ENCODE measurements at regions of chr12 and their contacts with region 1.

Region 1: GRCh38 chr12:109573029-109573913 is at the starts of genes MMAB and MVK:
- DNase-seq: peak; percentile 99 to 100 (median 100)
- ATAC-seq: peak; percentile 99
- H3K4me3 ChIP-seq: peak within 1 kb of the TSS; percentile 28 to 46
- H3K27ac ChIP-seq: peak within 1 kb of the TSS; percentile 79 to 92 (median 91)
- H3K4me1 ChIP-seq: peaks cover 31% of the 10 kb centered on the region
- H3K27me3 ChIP-seq: no peaks in the 10 kb centered on the region
- CTCF ChIP-seq: peak in 3 of 7 experiments; percentile 13 to 22 (median 16)
- POLR2A ChIP-seq: peak; percentile 12 to 88 (median 85)
- total RNA-seq, gene MMAB: 12.5 to 29.7 TPM
- total RNA-seq, gene MVK: 8.6 to 12.2 TPM

Region 2: DNA sequence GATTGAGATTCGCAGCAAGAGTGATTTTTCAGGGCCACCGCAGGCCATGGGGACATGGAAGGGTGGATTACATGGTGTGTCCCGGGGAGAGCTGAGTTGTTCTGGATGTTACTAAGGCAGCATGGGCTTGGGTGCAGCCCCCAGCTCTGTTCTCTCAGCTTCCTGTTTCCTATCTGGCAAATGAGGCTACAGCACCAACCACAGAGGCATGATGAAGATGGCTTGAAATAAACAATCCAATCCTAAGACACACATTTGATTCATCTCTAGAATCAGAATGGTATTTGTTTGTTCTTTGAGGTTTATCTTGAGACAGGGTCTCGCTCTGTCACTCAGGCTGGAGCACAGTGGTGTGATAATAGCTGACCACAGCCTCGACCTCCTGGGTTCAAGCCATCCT is 285.5 kb after region 1 on chr12:
- intact Hi-C with region 1: loop called (anchors 10 kb)
- DNase-seq: no peak
- ATAC-seq: no peak
- H3K4me3 ChIP-seq: no peak overlapping the region
- H3K27ac ChIP-seq: no peak overlapping the region
- H3K4me1 ChIP-seq: peaks cover 7% of the 10 kb centered on the region
- H3K27me3 ChIP-seq: no peaks in the 10 kb centered on the region
- CTCF ChIP-seq: no peak
- POLR2A ChIP-seq: no peak

Region 3: GRCh38 chr12:110245369-110245772 is 672.1 kb after region 1 on chr12:
- intact Hi-C with region 1: no loop called
- DNase-seq: peak in 3 of 4 donors; percentile 24 to 52 (median 34)
- ATAC-seq: no peak
- H3K4me3 ChIP-seq: no peak overlapping the region
- H3K27ac ChIP-seq: no peak overlapping the region
- H3K4me1 ChIP-seq: peaks cover 44% of the 10 kb centered on the region
- H3K27me3 ChIP-seq: no peaks in the 10 kb centered on the region
- CTCF ChIP-seq: peak in 2 of 7 experiments; percentile 18 to 23
- POLR2A ChIP-seq: no peak